ENCODE measurements at regions of chr1 and their contacts with region 1.

Region 1: DNA sequence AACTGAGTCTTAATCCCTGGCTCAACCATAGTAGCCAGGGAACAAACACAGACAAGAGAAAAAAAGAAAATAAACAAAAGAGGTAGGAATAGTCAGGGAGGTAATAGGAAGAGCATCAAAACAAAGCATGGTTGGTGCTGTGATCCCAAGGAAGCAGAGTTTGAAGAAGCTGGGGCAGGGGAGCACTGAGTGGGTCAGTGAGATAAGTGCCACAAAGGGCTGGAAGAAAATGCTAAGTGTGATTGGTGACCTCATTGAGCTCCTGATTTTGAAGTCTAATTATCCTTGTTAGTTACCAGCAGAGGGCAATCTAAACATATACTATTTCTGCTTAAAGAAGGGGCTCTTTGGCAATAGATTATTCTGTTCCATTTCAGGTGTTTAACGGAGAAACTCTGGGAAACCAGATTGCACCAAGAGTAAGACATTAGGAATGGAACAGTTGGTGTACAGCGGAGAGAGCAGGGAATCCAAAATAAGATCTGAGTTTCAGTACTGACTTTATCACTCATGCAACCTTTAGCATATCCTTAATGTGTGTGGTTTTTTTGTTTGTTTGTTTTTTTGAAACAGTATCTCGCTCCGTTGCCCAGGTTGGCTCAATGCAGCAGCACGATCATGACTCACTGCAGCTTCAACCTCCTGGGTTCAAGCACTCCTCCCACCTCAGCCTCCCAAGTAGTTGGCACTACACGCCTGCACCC is 30.7 kb upstream of the KIAA1614 start:
- DNase-seq: no peak
- H3K4me3 Mint-ChIP-seq: no peak overlapping the region
- H3K27ac Mint-ChIP-seq: no peak overlapping the region
- H3K4me1 Mint-ChIP-seq: peaks cover 6% of the 10 kb centered on the region
- H3K27me3 Mint-ChIP-seq: no peaks in the 10 kb centered on the region

Region 2: GRCh38 chr1:180751921-180752320 is 130.0 kb before region 1 on chr1:
- intact Hi-C with region 1: no loop called
- DNase-seq: no peak
- H3K4me3 Mint-ChIP-seq: no peak overlapping the region
- H3K27ac Mint-ChIP-seq: no peak overlapping the region
- H3K4me1 Mint-ChIP-seq: no peaks in the 10 kb centered on the region
- H3K27me3 Mint-ChIP-seq: no peaks in the 10 kb centered on the region

Region 3: GRCh38 chr1:180909005-180909414 is 27.1 kb after region 1 on chr1:
- intact Hi-C with region 1: no loop called
- DNase-seq: no peak
- H3K4me3 Mint-ChIP-seq: peak overlapping the region; percentile 48
- H3K27ac Mint-ChIP-seq: no peak overlapping the region
- H3K4me1 Mint-ChIP-seq: peaks cover 23% of the 10 kb centered on the region
- H3K27me3 Mint-ChIP-seq: peaks cover 30% of the 10 kb centered on the region

Region 4: GRCh38 chr1:180920702-180921101 is 38.7 kb after region 1 on chr1:
- intact Hi-C with region 1: loop called (anchors 2 kb)
- DNase-seq: no peak
- H3K4me3 Mint-ChIP-seq: no peak overlapping the region
- H3K27ac Mint-ChIP-seq: no peak overlapping the region
- H3K4me1 Mint-ChIP-seq: no peaks in the 10 kb centered on the region
- H3K27me3 Mint-ChIP-seq: peaks cover 14% of the 10 kb centered on the region

Region 5: GRCh38 chr1:181083842-181084605 is 202.1 kb after region 1 on chr1:
- intact Hi-C with region 1: loop called (anchors 2 kb)
- DNase-seq: peak; percentile 54
- H3K4me3 Mint-ChIP-seq: no peak overlapping the region
- H3K27ac Mint-ChIP-seq: peak overlapping the region; percentile 13
- H3K4me1 Mint-ChIP-seq: peaks cover 47% of the 10 kb centered on the region
- H3K27me3 Mint-ChIP-seq: peaks cover 21% of the 10 kb centered on the region

Region 6: GRCh38 chr1:181166377-181167196 is 284.6 kb after region 1 on chr1:
- intact Hi-C with region 1: loop called (anchors 1 kb)
- DNase-seq: peak; percentile 62
- H3K4me3 Mint-ChIP-seq: no peak overlapping the region
- H3K27ac Mint-ChIP-seq: no peak overlapping the region
- H3K4me1 Mint-ChIP-seq: peaks cover 6% of the 10 kb centered on the region
- H3K27me3 Mint-ChIP-seq: peaks cover 34% of the 10 kb centered on the region

Measured in activated T-helper 1 cell treated with anti-CD3 and anti-CD28 coated beads, Interleukin-12 subunit alpha, Interleukin-12 subunit beta, Interleukin-2, Interleukin-4 antibody, amounts not matched to agents 30 ng/mL and 10 ng/mL and 1 ng/mL, durations not matched to agents 14 hours and 24 hours and 36 hours (primary cell).